ENCODE measurements at regions of chr17 and their contacts with region 1.

Region 1: DNA sequence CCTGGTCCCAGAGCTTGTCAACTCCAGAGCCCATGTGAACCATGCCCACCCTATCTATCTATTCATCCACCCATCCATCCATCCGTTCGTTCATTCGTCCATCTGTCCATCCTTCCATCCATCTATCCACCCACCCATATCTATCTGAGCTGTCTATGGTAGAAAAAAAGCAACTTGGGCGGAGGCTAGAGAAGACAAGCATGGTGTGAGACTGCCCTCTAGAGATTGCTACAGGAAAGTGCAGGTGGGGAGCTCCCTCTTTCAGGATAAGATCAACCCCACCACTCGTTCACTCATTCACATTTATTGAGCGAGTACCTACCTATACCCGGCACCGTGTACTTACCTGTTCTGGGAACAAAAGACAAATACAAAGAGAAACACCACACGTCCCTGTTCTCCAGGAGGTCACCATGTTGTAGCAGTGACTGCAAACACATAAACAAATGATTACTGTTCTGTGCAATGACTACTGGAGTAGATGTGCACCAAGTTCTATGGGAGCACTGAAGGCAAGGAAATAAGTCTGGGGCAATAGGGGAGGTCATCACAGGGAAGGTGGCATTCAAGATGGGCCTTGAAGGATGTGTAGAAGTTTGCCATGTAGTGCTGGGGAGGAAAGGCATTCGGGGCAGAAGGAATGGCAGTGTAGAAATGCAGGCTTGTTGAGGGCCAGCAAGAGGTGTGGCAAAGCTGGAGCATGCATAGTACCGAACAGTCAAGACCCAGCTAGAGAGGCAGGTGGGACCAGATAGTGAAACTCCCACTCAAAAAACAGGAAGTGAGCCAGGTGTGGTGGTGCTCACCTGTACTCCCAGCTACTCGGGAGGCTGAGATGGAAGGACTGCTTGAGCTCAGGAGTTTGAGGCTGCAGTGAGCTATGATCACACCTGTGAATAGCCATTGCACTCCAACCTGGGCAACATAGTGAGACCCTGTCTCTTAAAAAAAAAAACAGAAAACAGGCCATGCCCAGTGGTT is 13.4 kb upstream of the ATP5MC1 start:
- DNase-seq: peak; percentile 55
- ATAC-seq: peak; percentile 89
- H3K4me3 ChIP-seq: no peak overlapping the region
- H3K27ac ChIP-seq: no peak overlapping the region
- H3K4me1 ChIP-seq: peaks cover 23% of the 10 kb centered on the region
- H3K27me3 ChIP-seq: no peaks in the 10 kb centered on the region
- CTCF ChIP-seq: peak; percentile 93 to 99 (median 98); a peak in 5 of 6 replicates
- EP300 ChIP-seq: no peak
- POLR2A ChIP-seq: no peak
- RAD21 ChIP-seq: peak; percentile 99

Region 2: GRCh38 chr17:48671697-48672171 is 207.5 kb before region 1 on chr17:
- CTCF ChIA-PET with region 1: interaction called, 271 read pairs
- POLR2A ChIA-PET with region 1: no interaction called
- RAD21 ChIA-PET with region 1: interaction called, 93 read pairs
- SMC1A ChIA-PET with region 1: interaction called, 77 read pairs
- in situ Hi-C with region 1: loop called (anchors 5 kb)
- intact Hi-C with region 1: loop called (anchors 1 kb)
- DNase-seq: no peak
- ATAC-seq: peak; percentile 79
- H3K4me3 ChIP-seq: no peak overlapping the region
- H3K27ac ChIP-seq: no peak overlapping the region
- H3K4me1 ChIP-seq: no peaks in the 10 kb centered on the region
- H3K27me3 ChIP-seq: no peaks in the 10 kb centered on the region
- CTCF ChIP-seq: peak; percentile 81 to 90 (median 84)
- EP300 ChIP-seq: no peak
- POLR2A ChIP-seq: no peak
- RAD21 ChIP-seq: peak; percentile 74

Region 3: DNA sequence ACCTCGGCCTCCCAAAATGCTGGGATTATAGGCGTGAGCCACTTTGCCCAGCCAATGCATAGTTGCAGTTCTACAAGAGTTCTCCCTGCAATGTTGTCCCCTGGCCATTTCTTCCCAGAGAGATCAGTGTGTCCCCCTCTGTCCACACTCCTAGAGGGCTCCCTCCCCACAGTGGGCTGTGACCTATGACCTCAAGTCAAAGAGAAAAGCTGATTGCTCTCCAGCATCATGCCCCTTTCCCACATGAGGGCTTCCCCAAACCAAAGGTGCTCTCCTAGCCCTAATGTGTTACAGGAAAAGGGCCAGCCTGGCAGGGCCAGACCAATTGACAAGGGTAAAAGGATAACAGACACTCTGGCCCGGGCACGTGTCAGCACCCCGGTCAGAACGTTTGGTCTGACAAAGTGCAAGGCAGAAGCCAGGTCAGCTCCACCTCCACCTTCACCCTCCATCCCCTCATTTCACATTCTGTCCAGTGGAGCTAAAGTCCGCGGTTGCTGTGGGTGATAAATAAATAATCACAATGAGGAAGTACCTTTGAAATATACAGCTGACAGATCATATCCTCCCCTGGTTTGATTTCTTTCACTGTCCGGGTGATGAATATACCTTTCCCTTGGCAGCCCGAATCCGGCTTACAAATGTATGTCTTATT is 80.0 kb before region 1 on chr17:
- CTCF ChIA-PET with region 1: interaction called, 470 read pairs
- POLR2A ChIA-PET with region 1: no interaction called
- RAD21 ChIA-PET with region 1: interaction called, 376 read pairs
- SMC1A ChIA-PET with region 1: interaction called, 134 read pairs
- in situ Hi-C with region 1: no loop called
- intact Hi-C with region 1: no loop called
- DNase-seq: no peak
- ATAC-seq: peak; percentile 42
- H3K4me3 ChIP-seq: no peak overlapping the region
- H3K27ac ChIP-seq: no peak overlapping the region
- H3K4me1 ChIP-seq: no peaks in the 10 kb centered on the region
- H3K27me3 ChIP-seq: no peaks in the 10 kb centered on the region; a peak in 1 of 4 replicates
- CTCF ChIP-seq: no peak
- EP300 ChIP-seq: no peak
- POLR2A ChIP-seq: no peak
- RAD21 ChIP-seq: no peak

Region 4: GRCh38 chr17:48830840-48831548 is 48.2 kb before region 1 on chr17 and contains the start of gene CALCOCO2:
- CTCF ChIA-PET with region 1: interaction called, 47 read pairs
- POLR2A ChIA-PET with region 1: interaction called, 4 read pairs
- RAD21 ChIA-PET with region 1: interaction called, 13 read pairs
- SMC1A ChIA-PET with region 1: interaction called, 281 read pairs
- in situ Hi-C with region 1: no loop called
- intact Hi-C with region 1: no loop called
- DNase-seq: peak; percentile 74
- ATAC-seq: peak; percentile 89
- H3K4me3 ChIP-seq: peak within 1 kb of the TSS; percentile 73
- H3K27ac ChIP-seq: peak within 1 kb of the TSS; percentile 85
- H3K4me1 ChIP-seq: peaks cover 20% of the 10 kb centered on the region
- H3K27me3 ChIP-seq: no peaks in the 10 kb centered on the region
- CTCF ChIP-seq: 0 out of 6 replicates have a peak, but pooled peaks of 1 of the 3 experiments have one; percentile 7
- EP300 ChIP-seq: no peak
- POLR2A ChIP-seq: peak; percentile 88
- RAD21 ChIP-seq: no peak
- polyA plus RNA-seq, gene CALCOCO2: 33.7 to 36.4 TPM

Region 5: DNA sequence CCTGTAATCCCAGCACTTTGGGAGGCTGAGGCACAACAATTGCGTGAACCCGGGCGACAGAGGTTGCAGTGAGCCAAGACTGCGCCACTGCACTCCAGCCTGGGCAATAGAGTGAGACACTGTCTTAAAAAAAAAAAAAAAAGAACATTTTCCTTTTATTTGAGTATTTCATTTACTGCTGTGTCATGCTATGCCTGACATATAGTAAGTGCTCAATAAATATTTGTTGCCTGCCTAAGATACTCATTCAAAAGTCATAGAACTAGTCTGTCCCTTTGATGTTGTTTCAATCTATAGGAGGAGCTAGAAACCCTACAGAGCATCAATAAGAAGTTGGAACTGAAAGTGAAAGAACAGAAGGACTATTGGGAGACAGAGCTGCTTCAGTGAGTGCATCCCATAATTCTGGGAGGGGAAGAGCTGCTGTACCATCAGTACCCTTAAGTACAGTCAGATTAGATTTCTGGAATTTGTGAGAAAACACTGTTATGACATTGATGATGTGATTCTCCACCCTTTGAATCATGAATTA is 28.4 kb before region 1 on chr17:
- CTCF ChIA-PET with region 1: interaction called, 30 read pairs
- POLR2A ChIA-PET with region 1: no interaction called
- RAD21 ChIA-PET with region 1: interaction called, 5 read pairs
- SMC1A ChIA-PET with region 1: interaction called, 6 read pairs
- in situ Hi-C with region 1: no loop called
- intact Hi-C with region 1: no loop called
- DNase-seq: no peak
- ATAC-seq: no peak
- H3K4me3 ChIP-seq: no peak overlapping the region
- H3K27ac ChIP-seq: no peak overlapping the region
- H3K4me1 ChIP-seq: no peaks in the 10 kb centered on the region
- H3K27me3 ChIP-seq: no peaks in the 10 kb centered on the region
- CTCF ChIP-seq: no peak
- EP300 ChIP-seq: no peak
- POLR2A ChIP-seq: no peak
- RAD21 ChIP-seq: no peak

Region 6: GRCh38 chr17:48954300-48954755 is 75.1 kb after region 1 on chr17:
- CTCF ChIA-PET with region 1: interaction called, 17 read pairs
- POLR2A ChIA-PET with region 1: no interaction called
- RAD21 ChIA-PET with region 1: interaction called, 10 read pairs
- SMC1A ChIA-PET with region 1: interaction called, 4 read pairs
- in situ Hi-C with region 1: no loop called
- intact Hi-C with region 1: no loop called
- DNase-seq: no peak
- ATAC-seq: peak; percentile 62
- H3K4me3 ChIP-seq: no peak overlapping the region
- H3K27ac ChIP-seq: no peak overlapping the region
- H3K4me1 ChIP-seq: peaks cover 7% of the 10 kb centered on the region; the same call in 1 of the 2 replicates
- H3K27me3 ChIP-seq: peaks cover 0 to 2% of the 10 kb centered on the region in 2 experiments; a peak in 2 of 4 replicates
- CTCF ChIP-seq: peak in 2 of 3 experiments; percentile 20 to 33; a peak in 2 of 6 replicates
- EP300 ChIP-seq: no peak
- POLR2A ChIP-seq: no peak
- RAD21 ChIP-seq: peak; percentile 57

Measured in GM12878 (cell line).